ENCODE measurements at regions of chr4 and their contacts with region 1.

Region 1: DNA sequence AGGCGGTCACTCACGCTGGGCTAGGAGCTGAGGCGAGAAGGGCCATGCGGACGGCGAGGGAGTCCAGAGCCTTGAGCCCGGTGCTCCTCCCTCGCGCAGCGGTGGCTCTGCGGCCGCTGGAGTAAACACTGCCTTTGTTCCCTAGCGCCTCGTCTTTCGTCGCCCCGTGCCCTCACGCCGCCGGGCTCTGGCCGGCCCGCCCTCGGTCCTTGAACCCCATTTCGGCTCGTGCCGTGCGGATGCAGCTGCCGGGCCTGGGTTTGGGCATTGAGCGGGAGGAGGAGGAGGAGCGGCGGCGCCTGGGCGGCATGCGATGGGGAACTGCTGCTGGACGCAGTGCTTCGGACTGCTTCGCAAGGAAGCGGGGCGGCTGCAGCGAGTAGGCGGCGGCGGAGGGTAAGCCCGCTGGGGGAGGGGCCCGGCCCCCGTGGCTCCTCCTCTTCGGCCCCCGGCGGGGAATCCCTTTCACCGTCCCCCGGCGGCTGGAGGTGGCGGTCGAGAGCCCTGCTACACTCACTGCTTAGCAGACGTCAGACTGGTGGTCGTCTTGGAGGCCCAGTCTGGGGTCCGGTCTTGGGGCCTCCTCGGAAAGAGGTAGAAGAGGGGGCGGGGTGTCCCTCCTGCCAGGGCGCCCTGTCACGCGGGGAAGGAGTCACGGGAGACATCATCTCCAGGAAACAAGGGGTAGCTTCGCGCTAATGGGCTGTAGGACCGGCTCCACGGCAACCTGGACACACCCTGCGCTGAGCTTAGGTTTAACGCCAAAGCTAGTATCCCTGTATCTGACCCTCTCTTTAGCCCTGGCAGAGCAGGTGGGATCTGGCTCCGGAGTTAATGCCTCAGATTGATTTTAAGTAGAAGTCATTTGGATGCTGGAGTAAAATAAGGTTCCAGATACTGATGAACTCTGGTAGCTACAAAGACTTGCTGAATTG is at the start of gene AP1AR:
- DNase-seq: peak; percentile 95
- ATAC-seq: peak; percentile 73
- H3K4me3 ChIP-seq: peak within 1 kb of the TSS; percentile 78 to 98 (median 94)
- H3K4me3 Mint-ChIP-seq: peak within 1 kb of the TSS; percentile 99
- H3K27ac ChIP-seq: peak within 1 kb of the TSS; percentile 94 to 98
- H3K27ac Mint-ChIP-seq: peak within 1 kb of the TSS; percentile 99
- H3K4me1 ChIP-seq: peaks cover 13 to 19% of the 10 kb centered on the region in 2 donors
- H3K4me1 Mint-ChIP-seq: peaks cover 25% of the 10 kb centered on the region
- H3K27me3 ChIP-seq: no peaks in the 10 kb centered on the region
- H3K27me3 Mint-ChIP-seq: peaks cover 1% of the 10 kb centered on the region
- CTCF ChIP-seq: peak; percentile 54
- total RNA-seq, gene AP1AR: 20.3 and 24.0 TPM in 2 replicates

Region 2: DNA sequence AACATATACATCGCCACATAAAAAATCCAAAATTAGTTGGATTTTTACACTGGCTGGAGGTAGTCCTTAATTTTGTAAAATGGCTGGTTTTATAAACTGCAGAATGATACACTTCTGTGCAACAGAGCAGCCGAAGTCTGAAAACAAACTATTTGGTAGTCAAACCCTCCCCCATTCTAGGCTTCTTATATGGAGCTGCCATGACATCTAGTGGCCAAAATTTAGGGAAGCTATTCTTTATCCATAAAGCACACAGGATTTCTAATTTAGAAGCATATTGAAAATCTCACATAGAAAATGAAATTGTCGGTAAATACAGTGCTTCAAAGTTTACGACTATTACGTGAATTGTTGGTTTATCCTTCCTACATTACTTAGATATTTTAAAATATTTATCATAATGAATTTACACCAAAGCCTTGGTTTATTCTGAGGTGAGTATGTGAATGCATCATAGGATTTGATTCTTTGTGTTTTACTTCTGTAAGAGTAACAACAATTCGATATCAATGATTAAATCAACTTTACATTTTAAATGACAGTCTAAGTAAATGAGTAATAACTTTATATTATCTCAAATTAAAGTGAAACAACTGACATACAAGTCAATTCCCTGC is 200.2 kb before region 1 on chr4:
- CTCF ChIA-PET with region 1: no interaction called
- POLR2A ChIA-PET with region 1: no interaction called
- intact Hi-C with region 1: no loop called
- DNase-seq: peak; percentile 30
- ATAC-seq: no peak
- H3K4me3 ChIP-seq: no peak overlapping the region
- H3K4me3 Mint-ChIP-seq: no peak overlapping the region
- H3K27ac ChIP-seq: no peak overlapping the region
- H3K27ac Mint-ChIP-seq: no peak overlapping the region
- H3K4me1 ChIP-seq: no peaks in the 10 kb centered on the region
- H3K4me1 Mint-ChIP-seq: no peaks in the 10 kb centered on the region
- H3K27me3 ChIP-seq: peaks cover 0 to 20% (median 5%) of the 10 kb centered on the region in 4 experiments
- H3K27me3 Mint-ChIP-seq: peaks cover 30% of the 10 kb centered on the region
- CTCF ChIP-seq: peak; percentile 51

Region 3: DNA sequence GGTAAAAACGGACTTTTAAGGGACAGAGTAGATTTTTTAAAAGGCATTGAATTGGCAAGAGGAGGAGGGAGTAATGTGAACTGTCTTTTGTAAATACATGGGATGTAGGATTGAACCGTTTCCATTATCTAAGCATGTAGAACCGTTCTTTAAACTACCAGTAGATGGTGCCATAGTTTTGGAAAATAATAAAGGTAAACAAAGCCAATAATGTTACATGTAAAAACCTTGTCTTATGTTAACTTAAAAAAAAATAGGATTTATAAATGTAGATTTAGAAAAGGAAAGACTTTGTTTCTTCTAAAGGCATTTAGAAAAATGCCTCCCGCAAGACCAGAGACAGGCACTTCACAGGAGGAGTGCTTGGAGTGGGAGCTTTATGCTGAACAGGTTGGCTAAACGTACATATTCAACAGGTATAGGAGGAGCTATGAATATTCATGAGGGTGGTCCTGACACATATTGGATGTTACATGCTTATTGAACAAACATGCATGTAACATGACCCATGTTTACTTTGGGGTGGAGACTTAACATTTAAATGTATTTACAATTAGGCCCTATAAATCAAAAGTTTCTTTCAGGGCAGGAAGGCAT is 132.2 kb before region 1 on chr4:
- CTCF ChIA-PET with region 1: interaction called, 75 read pairs
- POLR2A ChIA-PET with region 1: no interaction called
- intact Hi-C with region 1: loop called (anchors 1 kb)
- DNase-seq: peak; percentile 57
- ATAC-seq: peak; percentile 36
- H3K4me3 ChIP-seq: no peak overlapping the region
- H3K4me3 Mint-ChIP-seq: no peak overlapping the region
- H3K27ac ChIP-seq: no peak overlapping the region
- H3K27ac Mint-ChIP-seq: no peak overlapping the region
- H3K4me1 ChIP-seq: no peaks in the 10 kb centered on the region
- H3K4me1 Mint-ChIP-seq: no peaks in the 10 kb centered on the region
- H3K27me3 ChIP-seq: peaks cover 0 to 4% (median 0%) of the 10 kb centered on the region in 4 experiments
- H3K27me3 Mint-ChIP-seq: no peaks in the 10 kb centered on the region
- CTCF ChIP-seq: peak; percentile 78

Region 4: DNA sequence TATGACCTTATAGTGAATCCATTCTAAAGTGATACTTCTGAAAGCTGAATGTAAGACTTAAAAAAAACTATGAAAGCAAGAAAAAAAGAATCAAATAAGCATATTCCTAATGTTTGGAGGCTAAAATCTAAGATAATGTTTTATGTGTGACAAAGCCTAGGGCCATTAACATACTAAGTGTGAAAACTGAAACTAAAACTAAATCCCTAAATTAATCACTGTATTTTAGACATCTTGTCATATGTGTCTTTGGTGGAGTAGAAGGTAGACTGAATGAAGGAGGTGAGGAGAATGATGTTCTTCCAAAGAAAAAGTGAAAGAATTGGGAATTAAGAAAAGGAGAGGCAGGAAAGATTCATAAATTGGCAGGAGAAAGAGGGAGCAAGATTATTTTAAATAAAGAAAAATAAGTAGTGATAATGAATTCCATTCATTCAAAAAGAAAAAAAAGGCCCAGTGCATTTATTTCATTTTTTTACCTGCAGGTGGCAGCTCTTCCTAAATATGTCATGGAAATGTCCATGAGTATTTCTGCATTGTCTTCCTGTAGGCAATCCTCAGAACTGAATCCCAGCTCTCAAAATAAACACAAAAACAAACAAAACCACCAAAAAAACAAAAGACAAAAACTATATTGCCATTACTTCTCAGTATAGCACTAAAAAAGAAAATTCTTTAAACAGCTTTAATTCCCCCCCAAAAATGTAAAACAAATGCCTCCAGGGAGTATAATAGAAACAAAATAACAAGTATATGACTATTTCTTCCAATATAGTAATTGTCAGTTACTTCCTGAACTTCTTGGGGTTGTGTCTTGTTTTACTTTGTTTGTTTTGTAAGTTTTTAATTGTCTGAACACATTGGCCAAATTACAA is 17.4 kb before region 1 on chr4:
- CTCF ChIA-PET with region 1: interaction called, 105 read pairs
- POLR2A ChIA-PET with region 1: interaction called, 3 read pairs
- intact Hi-C with region 1: loop called (anchors 1 kb)
- DNase-seq: peak; percentile 38
- ATAC-seq: no peak
- H3K4me3 ChIP-seq: no peak overlapping the region
- H3K4me3 Mint-ChIP-seq: no peak overlapping the region
- H3K27ac ChIP-seq: no peak overlapping the region
- H3K27ac Mint-ChIP-seq: no peak overlapping the region
- H3K4me1 ChIP-seq: no peaks in the 10 kb centered on the region
- H3K4me1 Mint-ChIP-seq: no peaks in the 10 kb centered on the region
- H3K27me3 ChIP-seq: no peaks in the 10 kb centered on the region
- H3K27me3 Mint-ChIP-seq: no peaks in the 10 kb centered on the region
- CTCF ChIP-seq: peak; percentile 70

Region 5: DNA sequence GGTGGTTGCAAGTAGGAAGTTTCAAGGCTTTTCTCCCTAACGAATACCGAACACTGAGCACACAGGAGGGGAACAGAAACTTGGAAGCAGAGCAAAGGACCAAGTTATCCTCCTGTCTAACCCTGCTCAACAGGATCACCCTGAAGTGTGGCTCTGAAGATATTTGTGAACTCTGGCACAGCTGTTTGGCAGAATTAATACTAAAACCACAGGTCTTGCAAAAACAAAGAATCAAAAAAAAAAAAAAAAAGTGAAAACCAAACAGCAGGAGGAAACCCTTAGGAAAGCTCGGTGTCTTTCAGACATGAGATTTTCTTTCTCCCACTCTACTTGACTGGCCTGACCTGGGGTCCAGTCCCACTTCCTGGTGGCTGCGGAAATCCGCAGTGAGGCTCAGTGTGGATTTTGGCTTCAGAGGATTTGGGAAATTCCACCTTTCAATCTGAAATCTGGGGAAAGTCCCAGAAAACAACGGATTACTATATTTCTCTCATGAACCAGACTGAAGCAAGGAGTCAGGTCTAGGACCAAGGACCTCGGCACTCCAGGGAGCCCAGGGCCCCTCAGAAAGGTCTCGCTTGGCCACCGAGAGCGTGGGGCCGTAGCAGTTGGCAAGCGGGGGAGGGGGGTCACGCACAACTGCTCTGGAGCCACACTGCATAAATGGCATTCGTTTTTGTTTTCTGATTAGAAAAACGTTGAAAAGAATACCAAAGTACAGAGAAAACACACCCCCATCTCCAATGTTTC is 52.8 kb after region 1 on chr4:
- CTCF ChIA-PET with region 1: interaction called, 19 read pairs
- POLR2A ChIA-PET with region 1: interaction called, 8 read pairs
- intact Hi-C with region 1: loop called (anchors 1 kb)
- DNase-seq: peak; percentile 57
- ATAC-seq: peak; percentile 15
- H3K4me3 ChIP-seq: peak overlapping the region; percentile 78 to 95 (median 89)
- H3K4me3 Mint-ChIP-seq: peak overlapping the region; percentile 97
- H3K27ac ChIP-seq: peak overlapping the region; percentile 86 to 95
- H3K27ac Mint-ChIP-seq: peak overlapping the region; percentile 94
- H3K4me1 ChIP-seq: peaks cover 67 to 75% of the 10 kb centered on the region in 2 donors
- H3K4me1 Mint-ChIP-seq: peaks cover 84% of the 10 kb centered on the region
- H3K27me3 ChIP-seq: no peaks in the 10 kb centered on the region
- H3K27me3 Mint-ChIP-seq: no peaks in the 10 kb centered on the region
- CTCF ChIP-seq: no peak

Region 6: DNA sequence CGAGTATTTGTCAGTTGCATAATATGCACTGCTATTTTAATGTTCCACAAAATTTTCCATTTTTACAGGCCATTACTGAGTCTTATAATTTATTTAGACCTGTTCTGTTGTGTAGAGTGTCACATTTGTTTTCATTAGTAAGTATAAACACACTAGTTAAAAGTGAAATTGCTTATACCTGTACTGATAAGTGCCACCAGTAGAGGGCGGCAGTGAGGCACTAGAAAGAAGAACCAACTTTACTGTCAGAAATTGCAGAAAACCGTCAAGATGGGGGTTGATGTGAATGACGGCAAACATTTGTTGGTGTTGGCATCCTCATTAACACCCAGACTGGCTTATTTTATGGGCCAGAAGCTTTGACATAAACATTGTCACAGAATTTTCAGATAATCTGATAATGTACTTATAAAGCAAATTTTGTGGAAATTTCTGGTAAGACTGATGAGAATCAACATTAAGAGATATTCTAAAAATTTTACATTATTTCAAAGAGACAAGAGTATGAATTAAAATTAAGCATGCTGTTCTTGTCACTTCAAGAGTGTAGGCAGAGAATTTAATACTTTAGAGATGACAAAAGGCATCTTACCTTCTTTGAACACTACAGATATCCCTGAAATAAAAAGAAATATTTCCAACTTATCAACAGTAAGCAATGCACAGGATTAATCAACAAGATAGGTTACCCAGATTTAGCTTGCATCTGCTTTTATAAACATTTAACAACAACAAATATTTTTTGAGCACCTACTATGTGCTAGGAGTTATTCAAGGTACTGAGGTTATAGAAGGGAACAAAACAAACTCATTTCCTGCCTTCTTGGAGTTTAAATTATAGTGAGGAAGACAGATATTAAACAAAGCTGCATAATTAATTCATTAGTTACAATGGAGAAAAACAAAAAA is 90.0 kb after region 1 on chr4:
- CTCF ChIA-PET with region 1: interaction called, 7 read pairs
- POLR2A ChIA-PET with region 1: no interaction called
- intact Hi-C with region 1: loop called (anchors 2 kb)
- DNase-seq: peak; percentile 83
- ATAC-seq: peak; percentile 73
- H3K4me3 ChIP-seq: peak overlapping the region in 1 of 5 experiments; percentile 44
- H3K4me3 Mint-ChIP-seq: no peak overlapping the region
- H3K27ac ChIP-seq: no peak overlapping the region
- H3K27ac Mint-ChIP-seq: no peak overlapping the region
- H3K4me1 ChIP-seq: peaks cover 0 to 8% of the 10 kb centered on the region in 2 donors
- H3K4me1 Mint-ChIP-seq: peaks cover 12% of the 10 kb centered on the region
- H3K27me3 ChIP-seq: no peaks in the 10 kb centered on the region
- H3K27me3 Mint-ChIP-seq: no peaks in the 10 kb centered on the region
- CTCF ChIP-seq: peak; percentile 99

Measured in B cell (primary cell).